ENCODE measurements at regions of chr1 and their contacts with region 1.

Region 1: DNA sequence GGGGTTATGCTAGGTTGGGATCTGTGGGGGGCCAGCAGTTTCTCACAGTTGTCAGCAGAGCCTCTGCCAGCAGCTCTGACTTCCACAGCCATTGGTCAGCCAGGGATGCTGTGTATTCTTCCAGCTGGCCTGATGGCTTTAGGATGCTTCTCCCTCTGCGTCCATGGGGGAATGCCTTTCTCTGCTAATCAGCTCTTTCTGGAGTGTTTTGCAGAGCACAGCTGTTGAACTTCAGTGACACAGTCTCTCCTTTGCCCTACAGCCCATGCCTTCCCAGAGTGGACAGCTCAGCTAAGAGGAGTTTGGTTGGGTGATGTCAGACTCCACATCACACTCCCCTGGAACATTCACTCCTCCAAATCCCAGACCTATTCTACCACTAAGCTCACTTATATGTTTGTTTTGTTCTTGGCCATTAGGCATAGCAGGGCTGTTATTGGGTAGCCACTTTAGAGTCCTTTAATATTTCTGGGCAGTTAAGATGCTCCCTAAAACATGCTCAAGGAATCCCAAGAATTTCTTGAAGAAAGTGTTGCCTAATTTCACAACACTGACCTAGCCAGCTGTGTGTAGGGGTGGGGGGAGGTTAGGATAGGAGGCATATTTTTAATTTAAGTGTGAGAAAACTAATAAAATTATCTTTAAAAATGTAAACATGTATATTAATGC is 75.3 kb upstream of the KIAA0040 start:
- DNase-seq: no peak

Region 2: DNA sequence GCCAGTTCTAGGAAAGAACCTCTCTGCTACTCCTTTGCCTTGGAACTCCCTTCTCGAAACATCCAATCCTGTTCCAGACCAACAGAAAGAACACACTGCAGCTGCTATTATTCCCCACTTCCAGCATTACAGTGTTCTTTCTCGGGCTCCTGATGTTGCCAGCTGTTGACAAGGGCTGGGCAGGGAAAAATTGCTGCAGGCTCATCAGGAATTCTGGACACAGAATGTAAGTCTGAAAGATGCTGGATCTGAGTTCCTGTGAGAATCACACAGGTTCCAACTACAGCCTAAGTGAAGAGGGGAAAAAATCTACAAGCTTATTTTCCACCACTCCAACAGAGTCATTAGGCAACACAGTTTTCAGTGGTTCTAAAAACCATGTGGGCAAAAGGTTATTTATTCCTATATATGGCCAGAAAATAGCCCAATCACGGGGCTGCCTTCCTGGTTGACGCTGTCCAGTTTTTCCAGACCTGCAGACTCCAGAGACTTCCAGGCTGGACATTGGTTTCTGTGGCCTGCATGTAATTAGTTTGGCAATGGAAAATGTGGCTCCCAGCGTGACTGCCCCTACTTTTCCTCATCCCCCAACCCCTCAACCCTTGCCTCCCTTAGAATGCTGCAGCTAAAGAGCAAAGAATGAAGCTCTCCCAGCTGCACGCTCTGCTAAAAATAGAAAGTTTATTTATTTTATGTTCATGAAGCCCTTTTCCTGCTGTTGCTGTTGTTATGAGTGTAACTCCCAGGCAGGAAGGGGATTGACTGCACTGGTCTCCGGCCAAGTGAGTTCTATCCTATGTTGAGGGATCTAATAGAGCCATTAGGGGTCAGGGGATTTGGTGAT is 67.0 kb before region 1 on chr1:
- intact Hi-C with region 1: loop called (anchors 1 kb)
- DNase-seq: no peak

Measured in cardiac septum (tissue), 1 donor.